ENCODE measurements at regions of chr4 and their contacts with region 1.

Region 1: GRCh38 chr4:141826260-141826659 is 189.9 kb downstream of the IL15 start:
- DNase-seq: no peak
- H3K4me3 ChIP-seq: no peak overlapping the region
- H3K27ac ChIP-seq: no peak overlapping the region
- H3K4me1 ChIP-seq: no peaks in the 10 kb centered on the region
- H3K27me3 ChIP-seq: peaks cover 2% of the 10 kb centered on the region
- CTCF ChIP-seq: no peak
- EP300 ChIP-seq: no peak
- POLR2A ChIP-seq: no peak

Region 2: DNA sequence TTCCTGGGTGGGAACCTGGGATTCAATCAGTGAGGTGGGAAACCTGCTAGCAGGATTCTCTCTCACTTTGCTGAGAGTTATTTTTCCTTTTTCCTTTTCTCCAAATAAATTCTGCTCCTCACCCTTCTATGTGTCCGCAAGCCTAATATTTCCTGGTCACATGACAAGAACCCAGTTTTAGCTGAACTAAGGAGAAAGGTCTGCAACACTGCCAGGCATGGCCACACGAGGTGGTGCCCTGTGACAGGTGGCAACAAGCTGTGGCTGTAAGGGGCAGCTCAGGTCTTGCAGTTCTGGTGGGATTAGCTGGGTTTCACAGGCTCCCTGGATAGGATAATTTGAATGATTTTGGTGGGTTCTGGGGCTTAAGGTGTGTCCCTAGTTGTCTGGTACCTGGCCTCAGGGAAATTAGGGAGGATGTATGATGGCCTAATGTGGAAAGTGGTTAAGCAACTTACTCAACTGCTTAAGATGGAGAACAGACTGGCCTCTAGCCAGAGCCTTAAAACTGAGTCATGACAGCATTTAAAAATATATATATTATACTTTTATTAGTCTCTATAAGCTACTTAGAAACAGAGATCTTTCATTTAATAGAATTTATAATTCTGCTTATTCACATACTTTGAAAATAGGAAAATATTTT is 25.1 kb after region 1 on chr4:
- intact Hi-C with region 1: loop called in 1 of 4 experiments (anchors 2 kb)
- DNase-seq: no peak
- H3K4me3 ChIP-seq: no peak overlapping the region
- H3K27ac ChIP-seq: no peak overlapping the region
- H3K4me1 ChIP-seq: no peaks in the 10 kb centered on the region
- H3K27me3 ChIP-seq: no peaks in the 10 kb centered on the region
- CTCF ChIP-seq: no peak
- EP300 ChIP-seq: no peak
- POLR2A ChIP-seq: no peak

Measured in ovary (tissue), 10 donors.